ENCODE measurements at regions of chr9 and their contacts with region 1.

Region 1: GRCh38 chr9:101126556-101126955 is 98.0 kb downstream of the PLPPR1 start:
- DNase-seq: no peak
- H3K4me3 ChIP-seq: no peak overlapping the region
- H3K27ac ChIP-seq: no peak overlapping the region
- H3K4me1 ChIP-seq: no peaks in the 10 kb centered on the region
- H3K27me3 ChIP-seq: no peaks in the 10 kb centered on the region
- CTCF ChIP-seq: no peak
- EP300 ChIP-seq: no peak
- POLR2A ChIP-seq: no peak

Region 2: GRCh38 chr9:99607842-99608448 is 1518.6 kb before region 1 on chr9:
- in situ Hi-C with region 1: no loop called
- intact Hi-C with region 1: no loop called
- DNase-seq: no peak
- H3K4me3 ChIP-seq: no peak overlapping the region
- H3K27ac ChIP-seq: no peak overlapping the region
- H3K4me1 ChIP-seq: no peaks in the 10 kb centered on the region
- H3K27me3 ChIP-seq: no peaks in the 10 kb centered on the region
- CTCF ChIP-seq: no peak
- EP300 ChIP-seq: no peak
- POLR2A ChIP-seq: no peak

Region 3: GRCh38 chr9:99713838-99714306 is 1412.7 kb before region 1 on chr9:
- in situ Hi-C with region 1: no loop called
- intact Hi-C with region 1: no loop called
- DNase-seq: no peak
- H3K4me3 ChIP-seq: no peak overlapping the region
- H3K27ac ChIP-seq: no peak overlapping the region
- H3K4me1 ChIP-seq: no peaks in the 10 kb centered on the region
- H3K27me3 ChIP-seq: no peaks in the 10 kb centered on the region
- CTCF ChIP-seq: no peak
- EP300 ChIP-seq: no peak
- POLR2A ChIP-seq: no peak

Region 4: DNA sequence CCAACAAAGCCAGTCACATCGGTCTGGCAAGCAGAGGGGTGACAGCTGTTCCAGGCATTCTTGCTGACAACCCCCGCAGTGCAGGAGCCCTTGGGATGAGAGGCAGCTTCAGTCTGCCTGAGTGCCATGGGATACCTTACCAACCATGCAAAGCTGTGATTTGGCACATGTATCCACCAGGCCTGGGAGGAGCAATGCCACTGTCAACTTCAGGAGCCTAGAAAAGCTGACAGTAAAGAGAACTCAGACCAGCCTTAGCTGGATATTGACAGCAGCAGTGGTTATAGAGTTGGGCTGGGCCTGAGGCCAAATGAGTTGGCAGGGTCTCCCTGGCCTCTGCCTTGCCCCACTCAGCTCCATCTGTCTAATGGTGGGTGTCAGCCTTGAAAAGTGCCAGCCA is 108.1 kb before region 1 on chr9:
- in situ Hi-C with region 1: no loop called
- intact Hi-C with region 1: no loop called
- DNase-seq: no peak
- H3K4me3 ChIP-seq: no peak overlapping the region
- H3K27ac ChIP-seq: no peak overlapping the region
- H3K4me1 ChIP-seq: no peaks in the 10 kb centered on the region
- H3K27me3 ChIP-seq: no peaks in the 10 kb centered on the region
- CTCF ChIP-seq: no peak
- EP300 ChIP-seq: no peak
- POLR2A ChIP-seq: no peak

Region 5: DNA sequence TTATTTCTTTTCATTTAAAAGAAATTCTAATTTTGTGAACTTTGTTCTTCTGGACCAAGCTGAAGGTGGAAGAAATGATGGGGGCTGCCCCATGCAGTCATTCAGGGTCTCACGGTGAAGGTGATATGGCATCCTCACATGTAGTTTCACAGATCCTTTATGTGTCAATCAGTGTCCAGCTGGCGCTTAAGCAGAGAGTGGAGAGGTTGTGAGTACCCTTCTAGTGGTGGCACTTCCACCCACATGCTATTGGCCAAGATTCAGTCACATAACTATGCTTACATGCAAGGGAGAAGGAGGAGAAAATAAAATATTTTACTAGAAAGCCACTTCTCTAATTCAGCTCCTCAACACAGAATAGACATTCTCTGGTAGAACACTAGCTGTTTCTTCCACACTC is 63.4 kb before region 1 on chr9:
- in situ Hi-C with region 1: loop called in 1 of 4 experiments (anchors 10 kb)
- intact Hi-C with region 1: no loop called
- DNase-seq: no peak
- H3K4me3 ChIP-seq: no peak overlapping the region
- H3K27ac ChIP-seq: no peak overlapping the region
- H3K4me1 ChIP-seq: no peaks in the 10 kb centered on the region
- H3K27me3 ChIP-seq: no peaks in the 10 kb centered on the region
- CTCF ChIP-seq: no peak
- EP300 ChIP-seq: no peak
- POLR2A ChIP-seq: no peak